ENCODE measurements at regions of chr17 and their contacts with region 1.

Region 1: GRCh38 chr17:66466840-66467367 is 164.5 kb downstream of the PRKCA start:
- DNase-seq: peak; percentile 92
- ATAC-seq: peak; percentile 84
- H3K4me3 ChIP-seq: no peak overlapping the region; a peak in 1 of 6 replicates
- H3K27ac ChIP-seq: peak overlapping the region; percentile 25
- H3K4me1 ChIP-seq: peaks cover 61% of the 10 kb centered on the region
- H3K27me3 ChIP-seq: no peaks in the 10 kb centered on the region
- CTCF ChIP-seq: no peak
- EP300 ChIP-seq: peak; percentile 32 to 37; a peak in 1 of 4 replicates
- POLR2A ChIP-seq: no peak
- RAD21 ChIP-seq: no peak

Region 2: DNA sequence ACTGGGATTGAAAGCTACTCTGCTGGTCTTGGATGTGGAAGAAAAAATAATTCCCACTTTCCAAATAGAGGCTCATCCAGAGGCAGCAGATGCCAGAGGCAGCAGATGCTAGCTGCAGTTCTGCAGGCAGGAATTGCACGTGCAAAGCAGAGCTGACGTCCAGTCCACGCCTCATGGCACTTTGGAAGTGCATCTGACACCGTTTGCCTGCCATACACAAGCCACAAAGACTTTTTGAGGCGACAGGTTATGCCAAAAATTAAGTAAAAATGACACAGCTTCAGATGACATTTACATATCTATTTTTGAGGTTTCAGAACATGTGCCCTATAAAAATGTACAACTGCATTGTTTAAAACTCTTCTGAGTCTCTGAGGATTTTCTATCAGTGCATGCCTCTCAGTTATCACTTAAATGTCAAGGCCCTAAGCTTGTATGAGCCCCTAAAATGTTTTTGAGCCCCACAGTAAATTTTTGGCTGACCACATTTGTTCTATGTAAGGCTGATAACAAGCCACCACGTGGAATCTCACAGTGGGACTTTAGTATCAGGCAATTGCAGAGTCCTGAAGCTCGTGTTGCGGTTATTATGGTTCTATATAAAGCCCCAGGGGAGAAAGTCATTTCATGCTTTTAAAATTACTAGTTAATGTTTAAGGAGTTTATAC is 74.7 kb after region 1 on chr17:
- CTCF ChIA-PET with region 1: no interaction called
- POLR2A ChIA-PET with region 1: no interaction called
- in situ Hi-C with region 1: no loop called
- intact Hi-C with region 1: loop called (anchors 10 kb)
- DNase-seq: no peak
- ATAC-seq: no peak
- H3K4me3 ChIP-seq: no peak overlapping the region
- H3K27ac ChIP-seq: no peak overlapping the region
- H3K4me1 ChIP-seq: peaks cover 38% of the 10 kb centered on the region
- H3K27me3 ChIP-seq: no peaks in the 10 kb centered on the region
- CTCF ChIP-seq: no peak
- EP300 ChIP-seq: no peak
- POLR2A ChIP-seq: no peak
- RAD21 ChIP-seq: no peak

Measured in HepG2 (cell line).